HCT116 (cell line): ENCODE measurements at regions of chr3 and their contacts with region 1.

Region 1: GRCh38 chr3:186241910-186242821 is 119.9 kb downstream of the DGKG start:
- DNase-seq: peak; percentile 80
- ATAC-seq: peak; percentile 95
- H3K4me3 ChIP-seq: peak overlapping the region; percentile 44 to 68
- H3K27ac ChIP-seq: peak overlapping the region; percentile 62
- H3K4me1 ChIP-seq: peaks cover 2 to 19% of the 10 kb centered on the region in 2 experiments; a peak in 3 of 4 replicates
- H3K27me3 ChIP-seq: no peaks in the 10 kb centered on the region
- CTCF ChIP-seq: peak; percentile 76 to 92 (median 83)
- POLR2A ChIP-seq: no peak
- RAD21 ChIP-seq: peak; percentile 91

Region 2: DNA sequence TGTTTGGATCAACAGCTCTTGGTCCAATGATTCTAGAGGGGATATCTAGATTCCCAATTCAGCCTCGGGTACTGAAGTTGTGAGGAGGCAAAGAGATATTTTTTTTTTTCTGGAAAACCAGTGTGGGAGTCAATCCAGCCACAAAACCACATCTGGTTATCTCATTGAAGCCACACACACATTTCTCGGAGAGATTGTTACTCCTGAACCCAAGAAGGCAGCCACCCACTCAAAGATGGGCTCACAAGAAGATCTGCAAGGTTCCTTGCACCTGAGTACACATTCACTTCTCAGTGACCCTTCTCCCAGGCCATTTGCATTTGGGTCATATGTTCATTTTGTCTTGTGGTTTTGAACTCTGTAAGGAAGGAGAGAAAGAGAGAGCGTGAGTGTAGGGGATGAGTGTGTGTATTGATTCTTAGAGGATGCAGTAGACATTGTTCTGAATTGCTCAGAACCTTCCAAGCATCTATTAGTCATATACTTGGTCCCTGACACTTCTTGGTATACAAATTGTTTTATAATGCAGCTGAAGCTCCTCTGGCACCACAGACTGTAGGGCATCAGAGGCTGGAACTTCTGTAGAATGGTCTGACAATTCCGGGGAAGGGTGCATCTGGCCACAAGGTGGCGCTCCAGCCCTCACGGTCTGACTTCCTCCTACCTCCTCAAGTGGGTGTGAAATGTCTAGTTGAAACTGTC is 265.0 kb before region 1 on chr3:
- CTCF ChIA-PET with region 1: interaction called, 12 read pairs
- POLR2A ChIA-PET with region 1: no interaction called
- RAD21 ChIA-PET with region 1: interaction called in 1 of 2 experiments, 3 read pairs
- intact Hi-C with region 1: no loop called
- DNase-seq: peak; percentile 57
- ATAC-seq: peak; percentile 100
- H3K4me3 ChIP-seq: no peak overlapping the region
- H3K27ac ChIP-seq: no peak overlapping the region
- H3K4me1 ChIP-seq: peaks cover 0 to 8% of the 10 kb centered on the region in 2 experiments; a peak in 1 of 4 replicates
- H3K27me3 ChIP-seq: no peaks in the 10 kb centered on the region
- CTCF ChIP-seq: peak; percentile 80 to 97 (median 95)
- POLR2A ChIP-seq: no peak
- RAD21 ChIP-seq: peak; percentile 84

Region 3: GRCh38 chr3:186002884-186003472 is 239.2 kb before region 1 on chr3:
- CTCF ChIA-PET with region 1: interaction called, 17 read pairs
- POLR2A ChIA-PET with region 1: no interaction called
- RAD21 ChIA-PET with region 1: interaction called, 3 to 4 read pairs
- intact Hi-C with region 1: loop called (anchors 5 kb)
- DNase-seq: peak; percentile 31
- ATAC-seq: peak; percentile 95
- H3K4me3 ChIP-seq: no peak overlapping the region
- H3K27ac ChIP-seq: no peak overlapping the region
- H3K4me1 ChIP-seq: no peaks in the 10 kb centered on the region
- H3K27me3 ChIP-seq: no peaks in the 10 kb centered on the region
- CTCF ChIP-seq: peak; percentile 39 to 63 (median 44); a peak in 4 of 6 replicates
- POLR2A ChIP-seq: no peak
- RAD21 ChIP-seq: peak; percentile 68

Region 4: DNA sequence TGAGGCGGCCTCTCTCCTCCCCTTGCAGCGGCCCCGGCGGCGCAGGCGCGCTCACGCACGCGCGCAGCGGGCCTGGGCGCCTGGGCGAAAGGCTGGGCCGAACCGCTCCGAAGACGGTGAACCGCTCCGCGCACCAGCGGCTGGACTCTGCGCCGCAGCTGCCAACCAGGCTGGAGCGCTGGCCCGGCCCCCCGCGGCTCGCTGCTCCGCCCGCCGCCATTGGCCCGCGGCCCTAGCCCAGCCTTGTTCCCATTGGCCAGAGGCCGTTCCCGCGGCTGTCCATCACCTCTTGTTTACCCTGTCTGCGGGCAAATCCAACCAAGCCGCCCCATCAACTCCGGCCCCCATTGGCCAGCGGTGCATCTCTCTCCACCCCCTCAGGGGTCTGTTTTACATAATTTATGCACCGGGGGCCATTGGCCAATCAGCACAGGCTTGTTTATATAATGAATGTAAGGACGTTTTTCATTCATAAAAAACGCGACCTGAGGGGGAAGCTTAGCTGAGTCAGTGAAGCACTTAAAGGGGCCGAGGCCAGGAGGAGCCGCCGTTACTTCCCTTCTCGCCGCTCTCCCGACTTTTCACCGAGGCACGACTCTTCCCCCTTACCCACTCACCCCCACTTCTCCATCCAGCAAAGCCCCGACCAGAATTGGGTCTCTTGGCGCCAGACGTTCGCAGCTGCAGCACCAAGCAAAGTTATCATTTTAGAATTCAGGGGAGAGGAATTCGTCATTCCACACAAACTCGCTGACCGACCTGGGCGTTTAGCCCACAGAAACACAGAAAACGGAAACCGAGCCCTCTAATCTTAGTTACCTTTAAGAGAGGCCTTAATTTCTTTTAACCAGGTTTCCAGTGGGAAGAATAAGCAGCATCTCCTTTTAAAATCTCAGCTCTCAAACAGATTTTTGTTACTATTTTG is 133.0 kb before region 1 on chr3 and contains the start of gene ETV5:
- CTCF ChIA-PET with region 1: interaction called, 5 read pairs
- POLR2A ChIA-PET with region 1: no interaction called
- RAD21 ChIA-PET with region 1: no interaction called
- intact Hi-C with region 1: loop called (anchors 2 kb)
- DNase-seq: peak; percentile 98
- ATAC-seq: peak; percentile 93
- H3K4me3 ChIP-seq: peak within 1 kb of the TSS; percentile 91 to 93
- H3K27ac ChIP-seq: peak within 1 kb of the TSS; percentile 66
- H3K4me1 ChIP-seq: peaks cover 34 to 39% of the 10 kb centered on the region in 2 experiments
- H3K27me3 ChIP-seq: no peaks in the 10 kb centered on the region
- CTCF ChIP-seq: no peak
- POLR2A ChIP-seq: peak; percentile 78
- RAD21 ChIP-seq: no peak
- total RNA-seq, gene ETV5: 89.7 TPM

Region 5: GRCh38 chr3:186287711-186288110 is 45.5 kb after region 1 on chr3:
- CTCF ChIA-PET with region 1: no interaction called
- POLR2A ChIA-PET with region 1: no interaction called
- RAD21 ChIA-PET with region 1: no interaction called
- intact Hi-C with region 1: no loop called
- DNase-seq: no peak
- ATAC-seq: no peak
- H3K4me3 ChIP-seq: no peak overlapping the region
- H3K27ac ChIP-seq: no peak overlapping the region
- H3K4me1 ChIP-seq: no peaks in the 10 kb centered on the region
- H3K27me3 ChIP-seq: no peaks in the 10 kb centered on the region
- CTCF ChIP-seq: no peak
- POLR2A ChIP-seq: no peak
- RAD21 ChIP-seq: no peak

Region 6: DNA sequence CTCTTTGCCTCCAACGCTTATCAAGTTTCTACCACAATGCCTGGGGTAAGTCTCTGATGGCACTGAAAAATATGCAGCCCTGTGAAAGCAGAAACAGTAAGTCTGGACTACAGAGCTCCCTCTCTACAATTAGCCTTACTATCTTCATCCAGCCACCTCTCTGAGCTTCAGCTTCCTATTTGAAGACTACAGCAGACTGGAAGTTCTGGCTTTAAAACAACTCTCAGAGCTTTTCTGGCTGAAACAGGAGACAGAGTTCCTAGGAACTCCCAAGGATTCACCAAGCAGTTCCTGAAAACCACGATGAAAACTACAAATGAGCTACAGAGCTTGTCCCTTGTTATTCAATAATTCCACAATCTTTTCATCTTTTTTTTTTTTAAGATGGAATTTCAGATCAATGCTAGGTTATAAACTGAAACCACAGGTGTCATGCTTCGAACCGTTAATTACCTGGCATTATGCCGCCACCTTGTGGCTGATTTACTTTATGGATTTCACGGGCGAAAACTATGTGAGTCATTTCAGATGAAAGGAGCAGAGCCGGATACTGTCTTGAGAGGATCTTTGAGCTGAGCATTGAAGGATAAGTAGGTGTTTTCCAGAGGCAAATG is 298.2 kb after region 1 on chr3:
- CTCF ChIA-PET with region 1: interaction called, 25 read pairs
- POLR2A ChIA-PET with region 1: interaction called, 6 read pairs
- RAD21 ChIA-PET with region 1: interaction called in 1 of 2 experiments, 4 read pairs
- intact Hi-C with region 1: no loop called
- DNase-seq: peak; percentile 76
- ATAC-seq: peak; percentile 93
- H3K4me3 ChIP-seq: no peak overlapping the region
- H3K27ac ChIP-seq: no peak overlapping the region
- H3K4me1 ChIP-seq: peaks cover 9 to 17% of the 10 kb centered on the region in 2 experiments; a peak in 3 of 4 replicates
- H3K27me3 ChIP-seq: no peaks in the 10 kb centered on the region
- CTCF ChIP-seq: peak; percentile 50 to 83 (median 78)
- POLR2A ChIP-seq: no peak
- RAD21 ChIP-seq: peak; percentile 92